ENCODE measurements at regions of chr1 and their contacts with region 1.

Region 1: DNA sequence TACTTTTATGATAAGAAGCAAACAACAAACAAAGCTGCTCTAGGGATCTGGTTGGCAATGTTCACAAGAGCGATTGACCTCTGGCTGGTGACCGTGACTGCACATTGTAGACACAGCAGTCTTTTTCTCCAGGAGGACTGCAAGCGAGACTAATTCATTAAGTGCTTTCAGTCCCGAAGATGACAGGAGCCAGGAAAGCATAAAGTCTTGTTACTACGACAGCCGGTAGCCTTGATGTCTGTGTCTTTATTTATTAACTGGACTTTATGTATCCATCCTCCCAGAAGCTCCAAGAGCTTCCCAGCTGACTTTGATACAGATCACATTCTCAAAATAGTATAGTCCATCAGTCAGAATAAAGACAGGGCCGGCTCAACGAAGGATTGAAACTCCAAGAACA is 18.2 kb downstream of the FAM163A start:
- DNase-seq: no peak
- ATAC-seq: no peak
- H3K4me3 ChIP-seq: no peak overlapping the region
- H3K27ac ChIP-seq: no peak overlapping the region
- H3K4me1 ChIP-seq: no peaks in the 10 kb centered on the region
- H3K27me3 ChIP-seq: peaks cover 7% of the 10 kb centered on the region; the same call in 1 of the 2 replicates
- CTCF ChIP-seq: no peak

Region 2: DNA sequence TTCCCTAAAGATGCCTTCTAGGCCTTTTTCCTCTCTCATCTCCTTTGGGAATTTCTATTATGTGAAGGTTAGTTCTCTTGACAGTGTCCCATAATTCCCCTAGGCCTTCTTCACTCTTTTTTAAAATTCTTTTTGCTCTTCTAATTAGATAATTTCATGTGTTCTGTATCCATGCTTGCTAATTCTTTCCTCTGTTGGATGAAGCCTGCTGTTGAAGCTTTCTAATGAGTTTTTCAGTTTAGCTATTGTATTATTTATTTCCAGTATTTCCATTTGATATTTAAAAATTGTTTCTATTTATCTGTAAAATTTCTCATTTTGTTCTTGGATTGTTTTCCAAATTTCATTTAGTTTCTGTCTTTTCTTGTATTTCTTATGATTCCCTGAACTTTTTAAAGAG is 46.7 kb before region 1 on chr1:
- CTCF ChIA-PET with region 1: interaction called, 4 read pairs
- POLR2A ChIA-PET with region 1: no interaction called
- in situ Hi-C with region 1: no loop called
- intact Hi-C with region 1: loop called (anchors 5 kb)
- DNase-seq: no peak
- ATAC-seq: no peak
- H3K4me3 ChIP-seq: no peak overlapping the region
- H3K27ac ChIP-seq: no peak overlapping the region
- H3K4me1 ChIP-seq: no peaks in the 10 kb centered on the region
- H3K27me3 ChIP-seq: 0 out of 2 replicates have a peak, but pooled peaks cover 4% of the 10 kb centered on the region
- CTCF ChIP-seq: no peak

Region 3: DNA sequence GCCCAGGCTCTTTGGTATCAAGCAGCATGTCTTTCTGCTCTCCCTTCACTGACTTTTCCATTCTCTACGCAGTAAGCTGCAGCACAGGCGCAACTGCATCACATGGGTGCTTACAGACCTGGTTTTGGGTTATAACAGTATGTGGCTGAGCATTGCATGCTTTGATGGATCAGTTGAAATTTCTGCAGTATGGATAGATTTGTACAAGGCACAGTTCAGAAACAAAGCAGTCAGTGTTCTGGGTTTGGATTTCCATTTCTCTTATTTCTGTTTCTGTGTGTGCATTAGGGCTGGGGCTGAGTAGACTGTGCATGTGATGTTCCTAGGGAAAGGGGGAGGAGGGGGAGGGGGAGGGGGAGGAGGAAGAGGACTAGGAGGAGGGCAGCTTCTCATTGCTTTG is 13.7 kb before region 1 on chr1:
- CTCF ChIA-PET with region 1: no interaction called
- POLR2A ChIA-PET with region 1: no interaction called
- in situ Hi-C with region 1: no loop called
- intact Hi-C with region 1: no loop called
- DNase-seq: no peak
- ATAC-seq: no peak
- H3K4me3 ChIP-seq: no peak overlapping the region
- H3K27ac ChIP-seq: no peak overlapping the region
- H3K4me1 ChIP-seq: peaks cover 2% of the 10 kb centered on the region; the same call in 1 of the 2 replicates
- H3K27me3 ChIP-seq: peaks cover 18% of the 10 kb centered on the region
- CTCF ChIP-seq: no peak